Activated CD4-positive, alpha-beta T cell treated with anti-CD3 and anti-CD28 coated beads, Interleukin-2, amount 10 ng/mL, durations not matched to agents 24 days and 14 days (primary cell): ENCODE measurements at regions of chr3 and their contacts with region 1.

Region 1: GRCh38 chr3:105876780-105877327 is 8.0 kb upstream of the CBLB start:
- DNase-seq: no peak
- H3K4me3 Mint-ChIP-seq: peak overlapping the region; percentile 70
- H3K27ac Mint-ChIP-seq: peak overlapping the region; percentile 84
- H3K4me1 Mint-ChIP-seq: peaks cover 28% of the 10 kb centered on the region
- H3K27me3 Mint-ChIP-seq: no peaks in the 10 kb centered on the region

Region 2: DNA sequence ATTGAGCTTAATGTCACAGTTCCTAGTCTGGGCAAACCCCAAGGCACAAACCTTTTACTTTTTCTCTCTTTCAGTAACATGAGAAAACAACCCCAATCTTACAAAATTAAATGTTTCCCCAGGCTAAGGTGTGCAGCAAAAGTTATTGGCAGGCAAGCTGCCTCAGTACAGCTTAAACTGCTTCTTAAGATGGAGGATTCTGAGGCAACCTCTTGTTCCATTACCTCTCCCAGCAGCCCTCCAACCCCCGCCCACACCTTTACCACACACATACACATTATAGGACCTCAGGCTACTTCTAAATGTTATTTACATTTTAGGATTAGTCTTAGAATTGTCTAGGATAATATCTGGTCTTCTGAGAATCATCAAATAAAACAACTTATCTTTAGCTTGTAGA is 14.2 kb after region 1 on chr3:
- intact Hi-C with region 1: loop called (anchors 2 kb)
- DNase-seq: no peak
- H3K4me3 Mint-ChIP-seq: no peak overlapping the region
- H3K27ac Mint-ChIP-seq: peak overlapping the region; percentile 36
- H3K4me1 Mint-ChIP-seq: peaks cover 9% of the 10 kb centered on the region
- H3K27me3 Mint-ChIP-seq: no peaks in the 10 kb centered on the region

Region 3: DNA sequence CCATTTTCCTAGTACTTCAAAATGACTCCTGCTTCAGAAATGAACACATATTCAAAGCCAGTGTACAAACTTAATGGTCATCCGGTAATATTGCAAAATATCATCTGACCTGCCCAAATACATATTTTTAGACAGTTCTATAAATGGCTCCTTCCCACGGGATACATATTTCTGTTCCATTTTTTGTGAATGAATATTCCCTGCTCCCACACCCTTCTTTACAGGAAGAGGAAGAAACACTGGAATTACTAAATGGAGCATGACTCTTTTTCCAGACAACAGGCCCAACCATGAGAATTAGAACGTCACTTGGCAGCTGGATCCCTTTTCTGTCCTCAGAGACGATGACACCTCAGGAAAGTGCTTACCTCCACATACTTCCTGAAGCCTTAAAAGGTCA is 30.0 kb after region 1 on chr3:
- intact Hi-C with region 1: no loop called
- DNase-seq: no peak
- H3K4me3 Mint-ChIP-seq: no peak overlapping the region
- H3K27ac Mint-ChIP-seq: no peak overlapping the region
- H3K4me1 Mint-ChIP-seq: peaks cover 6% of the 10 kb centered on the region
- H3K27me3 Mint-ChIP-seq: no peaks in the 10 kb centered on the region